Activated naive CD4-positive, alpha-beta T cell treated with anti-CD3 and anti-CD28 coated beads for 36 hours (primary cell): ENCODE measurements at regions of chr15 and their contacts with region 1.

Region 1: GRCh38 chr15:38817427-38818156 is 253.0 kb upstream of the RASGRP1 start:
- DNase-seq: peak; percentile 90
- H3K4me3 Mint-ChIP-seq: no peak overlapping the region
- H3K27ac Mint-ChIP-seq: no peak overlapping the region
- H3K4me1 Mint-ChIP-seq: peaks cover 8% of the 10 kb centered on the region
- H3K27me3 Mint-ChIP-seq: peaks cover 2% of the 10 kb centered on the region

Region 2: GRCh38 chr15:38707802-38708671 is 109.6 kb before region 1 on chr15:
- CTCF ChIA-PET with region 1: interaction called, 9 read pairs
- intact Hi-C with region 1: loop called (anchors 2 kb)
- DNase-seq: peak; percentile 53
- H3K4me3 Mint-ChIP-seq: no peak overlapping the region
- H3K27ac Mint-ChIP-seq: no peak overlapping the region
- H3K4me1 Mint-ChIP-seq: no peaks in the 10 kb centered on the region
- H3K27me3 Mint-ChIP-seq: no peaks in the 10 kb centered on the region

Region 3: DNA sequence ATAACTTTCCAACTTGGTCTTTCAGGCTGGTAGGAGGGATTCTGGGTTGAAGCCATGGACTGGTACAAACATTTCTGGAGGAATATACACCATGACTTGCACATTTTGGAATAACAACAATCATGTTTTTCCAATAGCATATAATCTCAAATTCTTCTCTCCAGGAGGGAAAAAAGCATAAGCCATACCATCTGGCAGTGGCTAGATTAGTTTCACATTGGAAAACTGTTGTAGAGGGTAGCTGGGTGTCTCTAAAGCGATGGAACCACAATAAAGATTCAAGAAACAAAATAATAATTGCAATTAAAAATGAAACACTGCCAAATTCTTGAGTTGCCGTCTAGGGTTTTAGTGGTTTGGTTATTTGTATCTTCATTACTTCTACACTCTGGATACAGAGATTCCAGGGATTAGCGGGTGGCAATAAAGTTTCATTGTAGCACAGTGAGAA is 25.5 kb after region 1 on chr15:
- CTCF ChIA-PET with region 1: no interaction called
- intact Hi-C with region 1: no loop called
- DNase-seq: no peak
- H3K4me3 Mint-ChIP-seq: no peak overlapping the region
- H3K27ac Mint-ChIP-seq: no peak overlapping the region
- H3K4me1 Mint-ChIP-seq: no peaks in the 10 kb centered on the region
- H3K27me3 Mint-ChIP-seq: peaks cover 20% of the 10 kb centered on the region

Region 4: GRCh38 chr15:38853608-38854007 is 36.0 kb after region 1 on chr15:
- CTCF ChIA-PET with region 1: no interaction called
- intact Hi-C with region 1: loop called (anchors 1 kb)
- DNase-seq: peak; percentile 42
- H3K4me3 Mint-ChIP-seq: no peak overlapping the region
- H3K27ac Mint-ChIP-seq: no peak overlapping the region
- H3K4me1 Mint-ChIP-seq: no peaks in the 10 kb centered on the region
- H3K27me3 Mint-ChIP-seq: peaks cover 17% of the 10 kb centered on the region

Region 5: DNA sequence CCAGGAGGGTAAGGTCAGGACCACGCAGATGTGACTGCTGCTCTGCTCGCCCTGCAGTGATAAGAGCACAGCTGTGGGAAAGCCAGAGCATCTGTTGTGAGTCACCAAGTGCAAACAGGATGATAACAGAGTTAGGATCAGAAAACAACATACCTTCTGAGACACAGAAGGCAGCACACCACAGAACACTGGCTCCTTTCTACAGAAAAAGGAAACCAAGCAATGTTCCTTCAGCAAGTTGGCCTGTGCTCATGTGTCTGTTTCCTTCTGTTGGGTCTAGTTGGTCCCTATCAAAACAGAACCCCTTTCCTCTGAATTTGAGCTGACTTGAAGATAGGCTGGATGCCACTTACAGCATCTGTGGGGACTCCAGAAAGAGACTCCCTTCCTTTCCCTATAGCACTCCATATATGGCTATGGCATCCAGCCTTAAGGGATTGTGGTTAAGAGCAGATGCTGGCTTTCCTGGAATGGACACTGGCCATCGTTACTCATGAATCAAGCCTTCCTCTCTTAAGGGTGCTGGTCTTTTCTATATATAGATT is 322.5 kb after region 1 on chr15:
- CTCF ChIA-PET with region 1: no interaction called
- intact Hi-C with region 1: loop called (anchors 10 kb)
- DNase-seq: peak; percentile 20
- H3K4me3 Mint-ChIP-seq: no peak overlapping the region
- H3K27ac Mint-ChIP-seq: no peak overlapping the region
- H3K4me1 Mint-ChIP-seq: peaks cover 17% of the 10 kb centered on the region
- H3K27me3 Mint-ChIP-seq: peaks cover 13% of the 10 kb centered on the region

Region 6: DNA sequence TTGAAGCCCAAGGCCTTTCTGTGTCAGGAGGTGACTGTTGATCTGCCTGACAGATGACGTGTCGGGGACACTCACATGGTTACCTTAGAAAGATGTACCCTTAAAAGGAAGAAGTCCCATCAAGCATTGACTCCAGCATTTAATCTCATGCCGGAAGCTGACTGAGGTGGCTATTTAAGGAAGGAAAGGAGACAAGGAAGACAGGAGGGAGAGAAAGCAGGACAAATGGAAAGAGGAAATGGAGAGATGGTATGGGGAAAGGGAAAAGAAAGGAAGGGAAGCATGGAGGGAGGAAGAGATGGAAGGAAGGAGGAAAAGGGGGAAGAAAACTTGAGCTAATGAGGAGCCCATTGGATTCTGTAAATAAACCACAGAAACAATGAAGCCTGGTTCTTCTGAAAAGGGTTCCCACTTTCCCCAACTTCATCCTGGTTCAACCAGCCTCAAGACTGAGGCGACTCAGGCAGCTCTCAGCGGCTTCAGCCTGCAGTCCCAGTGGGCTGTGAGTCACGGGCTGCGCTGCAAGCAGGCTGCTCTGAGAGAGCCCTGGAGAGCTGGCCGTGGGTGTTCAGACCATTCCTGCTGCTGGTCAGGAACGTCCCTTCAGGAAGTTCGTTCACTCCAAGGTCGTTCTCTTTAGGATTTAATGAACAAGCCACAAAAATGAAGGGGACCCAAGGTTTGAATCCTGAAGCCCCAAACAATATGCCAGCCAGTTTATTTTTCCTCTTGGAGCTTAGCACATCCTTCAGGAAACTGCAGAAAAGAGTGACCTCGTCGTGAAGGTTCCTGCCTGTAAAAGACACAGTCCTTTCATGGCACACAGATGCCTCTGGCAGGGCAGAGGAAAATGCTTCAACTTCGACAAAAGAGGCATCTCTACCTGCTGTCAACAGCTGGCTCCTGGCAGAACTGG is 693.7 kb after region 1 on chr15:
- CTCF ChIA-PET with region 1: no interaction called
- intact Hi-C with region 1: no loop called
- DNase-seq: no peak
- H3K4me3 Mint-ChIP-seq: no peak overlapping the region
- H3K27ac Mint-ChIP-seq: no peak overlapping the region
- H3K4me1 Mint-ChIP-seq: no peaks in the 10 kb centered on the region
- H3K27me3 Mint-ChIP-seq: peaks cover 18% of the 10 kb centered on the region